ENCODE measurements at regions of chr17 and their contacts with region 1.

Region 1: GRCh38 chr17:48997083-48997826 is at the start of gene IGF2BP1:
- DNase-seq: no peak
- H3K4me3 ChIP-seq: peak within 1 kb of the TSS; percentile 40 to 52
- H3K27ac ChIP-seq: no peak within 1 kb of the TSS
- H3K4me1 ChIP-seq: peaks cover 5 to 18% of the 10 kb centered on the region in 2 donors
- H3K27me3 ChIP-seq: peaks cover 46% of the 10 kb centered on the region
- CTCF ChIP-seq: no peak
- total RNA-seq, gene IGF2BP1: not detected

Region 2: GRCh38 chr17:48310748-48311213 is 686.5 kb before region 1 on chr17:
- intact Hi-C with region 1: loop called (anchors 10 kb)
- DNase-seq: no peak
- H3K4me3 ChIP-seq: no peak overlapping the region
- H3K27ac ChIP-seq: no peak overlapping the region
- H3K4me1 ChIP-seq: no peaks in the 10 kb centered on the region
- H3K27me3 ChIP-seq: peaks cover 7% of the 10 kb centered on the region
- CTCF ChIP-seq: no peak

Region 3: DNA sequence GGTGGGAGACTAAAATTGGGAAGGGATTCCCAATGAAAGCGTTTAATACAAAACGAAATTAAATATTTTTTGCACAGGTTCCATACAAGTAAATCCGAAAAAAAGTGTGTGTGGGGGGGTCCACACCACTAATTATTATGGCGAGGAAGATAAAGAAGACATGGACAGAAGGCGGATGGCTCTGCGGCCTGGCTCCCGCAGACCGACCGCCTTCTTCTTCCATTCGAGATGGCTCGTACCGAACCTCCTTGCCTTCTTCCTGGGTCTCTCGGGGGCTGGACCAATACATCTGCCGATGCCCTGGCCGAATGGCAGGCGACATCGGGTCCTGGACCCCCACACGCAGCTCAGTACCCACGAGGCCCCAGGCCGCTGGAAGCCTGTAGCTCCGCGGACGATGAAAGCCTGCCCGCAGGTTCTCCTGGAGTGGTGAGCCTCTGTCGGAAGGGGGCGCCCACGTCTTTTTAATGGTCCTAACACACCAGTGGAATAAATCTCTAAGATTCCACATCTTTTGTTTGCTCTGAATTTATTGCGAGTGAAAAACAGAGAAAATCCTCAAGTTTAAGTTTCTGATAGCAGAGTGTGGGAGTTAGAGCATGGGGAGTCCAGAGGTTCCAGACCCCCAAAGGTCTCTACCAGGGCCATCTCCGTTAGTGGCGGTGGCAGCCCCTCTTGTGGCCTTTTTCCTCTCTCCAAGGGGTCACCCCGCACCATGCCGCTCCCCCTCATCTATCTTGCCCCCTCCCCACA is 272.8 kb before region 1 on chr17:
- intact Hi-C with region 1: loop called (anchors 5 kb)
- DNase-seq: peak in 1 of 2 donors; percentile 89
- H3K4me3 ChIP-seq: peak overlapping the region in 1 of 2 donors; percentile 19
- H3K27ac ChIP-seq: no peak overlapping the region
- H3K4me1 ChIP-seq: peaks cover 6 to 11% of the 10 kb centered on the region in 2 donors
- H3K27me3 ChIP-seq: peaks cover 65% of the 10 kb centered on the region
- CTCF ChIP-seq: peak; percentile 53 to 77 (median 62)

Region 4: DNA sequence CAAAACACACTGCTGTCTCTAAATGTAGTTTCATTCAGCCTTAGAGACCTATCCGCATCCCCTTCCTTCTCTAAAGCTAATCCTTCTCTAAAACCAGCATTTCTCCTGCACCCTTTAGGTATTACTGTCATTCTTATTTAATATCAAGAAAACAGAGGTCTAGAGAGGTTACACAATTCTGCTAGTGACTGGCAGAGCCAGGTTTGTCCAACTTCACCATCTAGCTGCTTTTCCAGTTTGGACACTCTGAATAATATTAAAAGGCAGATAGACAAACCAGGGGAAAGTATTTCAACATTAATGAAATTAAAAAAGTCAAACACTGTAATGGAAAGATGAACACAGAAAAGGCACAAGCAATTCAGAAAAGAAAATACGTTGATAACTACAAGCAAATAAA is 308.7 kb after region 1 on chr17:
- intact Hi-C with region 1: no loop called
- DNase-seq: no peak
- H3K4me3 ChIP-seq: no peak overlapping the region
- H3K27ac ChIP-seq: no peak overlapping the region
- H3K4me1 ChIP-seq: no peaks in the 10 kb centered on the region
- H3K27me3 ChIP-seq: no peaks in the 10 kb centered on the region
- CTCF ChIP-seq: no peak

Measured in ascending aorta (tissue), 2 donors.